ENCODE measurements at regions of chr18 and their contacts with region 1.

Region 1: GRCh38 chr18:50266248-50266704 is at the start of gene CFAP53:
- DNase-seq: peak; percentile 96
- ATAC-seq: peak; percentile 79
- H3K4me3 ChIP-seq: peak within 1 kb of the TSS; percentile 55 to 78 (median 66)
- H3K4me3 Mint-ChIP-seq: peak within 1 kb of the TSS; percentile 93
- H3K27ac ChIP-seq: peak within 1 kb of the TSS; percentile 57 to 81
- H3K27ac Mint-ChIP-seq: peak within 1 kb of the TSS; percentile 93
- H3K4me1 ChIP-seq: peaks cover 15 to 28% of the 10 kb centered on the region in 2 donors
- H3K4me1 Mint-ChIP-seq: peaks cover 23% of the 10 kb centered on the region
- H3K27me3 ChIP-seq: no peaks in the 10 kb centered on the region
- H3K27me3 Mint-ChIP-seq: no peaks in the 10 kb centered on the region
- CTCF ChIP-seq: no peak
- total RNA-seq, gene CFAP53: 0.75 and 0.79 TPM in 2 replicates

Region 2: DNA sequence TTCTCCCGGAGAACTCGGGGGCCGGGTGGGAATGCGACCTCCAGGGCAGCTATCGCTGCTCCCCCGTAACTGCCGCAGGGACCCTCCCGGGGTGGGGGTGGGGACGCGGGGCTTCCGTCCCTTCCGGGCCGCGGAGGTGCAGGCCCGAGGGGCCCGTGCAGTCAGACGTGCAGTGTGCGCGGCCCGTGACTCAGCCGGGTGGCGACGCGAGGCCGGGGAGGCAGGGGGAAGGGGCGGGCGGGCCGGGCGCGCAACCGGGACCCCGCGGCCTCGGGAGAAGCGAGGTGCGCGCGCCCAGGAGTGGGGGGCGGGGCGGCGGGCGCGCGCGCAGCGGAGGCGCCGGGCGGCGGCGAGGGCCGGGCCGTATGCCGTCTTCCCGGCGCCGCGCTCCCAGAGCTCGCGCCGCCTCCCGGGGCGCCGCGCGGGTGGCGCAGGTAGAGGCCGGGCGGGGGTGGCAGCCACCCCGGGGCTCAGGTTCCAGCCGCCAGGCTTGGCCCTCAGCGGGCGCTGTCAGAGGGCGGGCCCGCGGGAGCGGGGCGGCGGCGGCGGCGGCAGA is 1290.5 kb before region 1 on chr18:
- CTCF ChIA-PET with region 1: no interaction called
- POLR2A ChIA-PET with region 1: no interaction called
- intact Hi-C with region 1: loop called (anchors 5 kb)
- DNase-seq: peak; percentile 63
- ATAC-seq: peak; percentile 75
- H3K4me3 ChIP-seq: peak overlapping the region in 4 of 5 experiments; percentile 33 to 71 (median 54)
- H3K4me3 Mint-ChIP-seq: peak overlapping the region; percentile 86
- H3K27ac ChIP-seq: no peak overlapping the region
- H3K27ac Mint-ChIP-seq: no peak overlapping the region
- H3K4me1 ChIP-seq: peaks cover 14 to 16% of the 10 kb centered on the region in 2 donors
- H3K4me1 Mint-ChIP-seq: peaks cover 13% of the 10 kb centered on the region
- H3K27me3 ChIP-seq: peaks cover 0 to 36% (median 12%) of the 10 kb centered on the region in 4 experiments
- H3K27me3 Mint-ChIP-seq: peaks cover 29% of the 10 kb centered on the region
- CTCF ChIP-seq: no peak

Region 3: GRCh38 chr18:49813319-49814146 is 452.7 kb before region 1 on chr18 and contains the start of gene ACAA2:
- CTCF ChIA-PET with region 1: no interaction called
- POLR2A ChIA-PET with region 1: no interaction called
- intact Hi-C with region 1: loop called (anchors 5 kb)
- DNase-seq: peak; percentile 85
- ATAC-seq: peak; percentile 87
- H3K4me3 ChIP-seq: peak within 1 kb of the TSS; percentile 57 to 99 (median 88)
- H3K4me3 Mint-ChIP-seq: peak within 1 kb of the TSS; percentile 97
- H3K27ac ChIP-seq: peak within 1 kb of the TSS; percentile 87 to 90
- H3K27ac Mint-ChIP-seq: peak within 1 kb of the TSS; percentile 94
- H3K4me1 ChIP-seq: peaks cover 10 to 15% of the 10 kb centered on the region in 2 donors
- H3K4me1 Mint-ChIP-seq: peaks cover 20% of the 10 kb centered on the region
- H3K27me3 ChIP-seq: no peaks in the 10 kb centered on the region
- H3K27me3 Mint-ChIP-seq: no peaks in the 10 kb centered on the region
- CTCF ChIP-seq: no peak
- total RNA-seq, gene ACAA2: 24.0 and 25.0 TPM in 2 replicates

Region 4: DNA sequence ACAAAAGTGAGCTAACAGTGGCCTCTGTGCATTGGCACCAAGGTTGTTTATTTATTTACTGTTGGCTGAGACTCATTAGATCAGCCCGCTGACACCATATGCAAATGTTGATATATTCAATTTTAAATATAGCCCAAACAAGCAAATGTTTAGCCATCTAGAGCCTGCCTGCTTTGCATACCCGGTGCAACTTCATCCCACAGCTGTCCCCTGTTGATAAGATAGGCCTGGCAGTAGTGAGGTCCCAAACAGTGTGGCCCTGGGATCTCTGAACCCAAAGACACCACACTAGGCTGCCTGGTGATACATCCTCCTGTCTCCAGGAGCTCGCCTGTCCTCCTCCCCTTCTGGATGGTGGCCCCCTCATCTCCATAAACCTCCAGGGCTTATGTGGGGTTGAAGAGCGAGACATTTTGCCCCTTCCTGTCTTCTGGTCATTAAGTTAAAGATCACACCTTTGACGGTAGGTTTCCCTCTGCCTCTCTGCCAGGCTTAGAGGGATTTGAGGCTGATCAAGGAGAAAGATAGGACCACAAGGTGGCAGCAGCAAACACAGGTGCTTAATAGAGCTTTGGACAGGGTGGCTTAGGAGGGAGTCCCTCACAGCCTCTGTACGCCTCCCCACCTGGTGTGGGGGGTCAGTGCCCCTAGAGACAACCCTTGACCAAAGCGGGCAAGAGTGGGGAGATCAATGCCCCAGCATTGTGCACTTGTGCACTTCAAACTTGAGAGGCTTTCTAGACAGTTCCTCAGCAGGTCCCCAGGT is 47.7 kb before region 1 on chr18:
- CTCF ChIA-PET with region 1: interaction called, 38 read pairs
- POLR2A ChIA-PET with region 1: no interaction called
- intact Hi-C with region 1: loop called (anchors 1 kb)
- DNase-seq: peak; percentile 74
- ATAC-seq: peak; percentile 56
- H3K4me3 ChIP-seq: no peak overlapping the region
- H3K4me3 Mint-ChIP-seq: no peak overlapping the region
- H3K27ac ChIP-seq: no peak overlapping the region
- H3K27ac Mint-ChIP-seq: no peak overlapping the region
- H3K4me1 ChIP-seq: peaks cover 4 to 10% of the 10 kb centered on the region in 2 donors
- H3K4me1 Mint-ChIP-seq: peaks cover 5% of the 10 kb centered on the region
- H3K27me3 ChIP-seq: peaks cover 0 to 24% (median 2%) of the 10 kb centered on the region in 4 experiments
- H3K27me3 Mint-ChIP-seq: peaks cover 40% of the 10 kb centered on the region
- CTCF ChIP-seq: peak; percentile 62

Region 5: DNA sequence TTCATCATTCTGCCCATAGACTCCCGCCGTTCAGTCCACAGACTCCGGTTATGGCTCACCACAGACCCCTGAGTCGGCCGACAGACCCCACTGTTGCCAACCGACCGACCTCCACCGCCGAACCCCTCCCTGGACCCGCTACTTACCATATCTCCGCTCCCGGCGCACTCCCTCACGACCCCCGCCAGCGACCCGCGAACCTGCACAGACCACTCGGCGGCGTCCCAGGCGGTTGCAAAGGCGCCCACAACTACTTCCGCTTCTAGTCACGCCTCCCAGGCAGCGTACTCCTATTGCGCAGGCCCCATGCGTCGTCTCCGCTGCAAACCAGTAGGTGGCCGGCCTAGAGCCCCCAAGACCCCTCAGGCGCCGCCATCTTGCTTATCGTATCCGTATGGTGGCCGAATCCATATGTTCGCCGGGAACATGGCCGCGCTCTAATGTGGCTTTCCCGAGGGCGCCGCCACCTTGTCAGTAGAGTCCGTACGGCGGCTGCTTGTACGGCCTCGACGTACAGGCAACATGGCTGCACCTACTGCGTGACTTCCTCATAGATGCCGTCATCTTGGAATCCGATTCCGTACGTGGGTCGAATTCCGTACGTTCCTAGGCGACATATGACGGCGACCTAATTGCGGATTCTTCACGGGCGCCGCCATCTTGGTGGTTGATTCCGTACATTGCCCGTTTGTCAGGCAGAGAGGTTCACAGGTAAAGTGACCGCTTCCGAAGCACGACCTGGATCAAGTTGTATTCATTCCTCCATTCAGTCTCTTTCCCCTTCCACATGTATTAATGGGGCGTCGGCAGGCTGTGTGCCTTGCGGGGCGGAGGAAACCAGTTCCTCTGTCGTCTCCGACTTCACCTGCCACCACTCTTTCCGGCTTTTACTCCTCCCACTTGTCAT is 21.4 kb after region 1 on chr18 and contains the start of gene CXXC1:
- CTCF ChIA-PET with region 1: interaction called, 44 read pairs
- POLR2A ChIA-PET with region 1: no interaction called
- intact Hi-C with region 1: loop called (anchors 1 kb)
- DNase-seq: peak; percentile 99
- ATAC-seq: peak; percentile 91
- H3K4me3 ChIP-seq: peak within 1 kb of the TSS; percentile 64 to 97 (median 90)
- H3K4me3 Mint-ChIP-seq: peak within 1 kb of the TSS; percentile 98
- H3K27ac ChIP-seq: peak within 1 kb of the TSS; percentile 93
- H3K27ac Mint-ChIP-seq: peak within 1 kb of the TSS; percentile 94
- H3K4me1 ChIP-seq: peaks cover 8 to 13% of the 10 kb centered on the region in 2 donors
- H3K4me1 Mint-ChIP-seq: peaks cover 34% of the 10 kb centered on the region
- H3K27me3 ChIP-seq: no peaks in the 10 kb centered on the region
- H3K27me3 Mint-ChIP-seq: no peaks in the 10 kb centered on the region
- CTCF ChIP-seq: peak; percentile 42
- total RNA-seq, gene CXXC1: 136 and 157 TPM in 2 replicates

Region 6: DNA sequence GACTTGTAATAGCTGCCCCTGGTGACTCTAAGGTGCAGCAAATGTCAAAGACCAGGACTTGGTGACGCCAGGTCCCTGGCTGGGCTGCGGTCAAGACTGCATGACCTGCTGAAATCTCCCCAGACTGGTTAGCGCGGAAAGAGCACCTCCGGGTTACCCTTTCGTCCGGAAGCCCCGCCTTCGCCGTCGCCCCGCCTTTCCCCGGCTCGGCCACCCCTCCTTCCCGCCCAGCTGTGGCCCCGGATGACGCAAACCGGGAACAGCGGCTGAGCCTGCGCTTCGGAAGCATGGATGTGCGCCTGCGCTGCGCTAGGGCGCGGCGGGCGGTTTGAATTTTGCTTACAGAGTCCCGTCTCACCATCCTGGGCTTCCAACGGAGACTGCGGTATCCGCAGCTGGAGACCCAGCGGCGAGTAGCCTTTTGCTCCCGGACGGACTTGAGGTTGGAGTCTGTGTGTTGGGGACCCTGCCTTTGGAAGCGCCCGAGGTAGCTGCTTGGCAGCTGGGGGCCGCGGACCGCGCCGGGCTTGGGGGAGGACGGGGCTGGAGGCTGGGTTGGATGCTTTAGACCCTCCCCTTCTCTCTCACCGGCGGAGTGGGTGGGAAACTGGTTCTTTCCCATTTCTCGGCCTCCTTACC is 108.6 kb after region 1 on chr18 and contains the start of gene SKA1:
- CTCF ChIA-PET with region 1: interaction called, 5 read pairs
- POLR2A ChIA-PET with region 1: no interaction called
- intact Hi-C with region 1: loop called (anchors 1 kb)
- DNase-seq: peak; percentile 96
- ATAC-seq: peak; percentile 100
- H3K4me3 ChIP-seq: peak within 1 kb of the TSS; percentile 60 to 78 (median 72)
- H3K4me3 Mint-ChIP-seq: peak within 1 kb of the TSS; percentile 85
- H3K27ac ChIP-seq: peak within 1 kb of the TSS; percentile 66 to 83
- H3K27ac Mint-ChIP-seq: peak within 1 kb of the TSS; percentile 89
- H3K4me1 ChIP-seq: peaks cover 5 to 16% of the 10 kb centered on the region in 2 donors
- H3K4me1 Mint-ChIP-seq: peaks cover 15% of the 10 kb centered on the region
- H3K27me3 ChIP-seq: peaks cover 0 to 7% (median 3%) of the 10 kb centered on the region in 4 experiments
- H3K27me3 Mint-ChIP-seq: peaks cover 13% of the 10 kb centered on the region
- CTCF ChIP-seq: no peak
- total RNA-seq, gene SKA1: 0.52 and 0.66 TPM in 2 replicates